Mammary epithelial cell (primary cell): ENCODE measurements at regions of chr22 and their contacts with region 1.

Region 1: GRCh38 chr22:50691521-50691920 is 18.9 kb downstream of the SHANK3 start:
- DNase-seq: peak; percentile 28
- H3K4me3 ChIP-seq: no peak overlapping the region
- H3K27ac ChIP-seq: no peak overlapping the region
- H3K4me1 ChIP-seq: peaks cover 14% of the 10 kb centered on the region
- H3K27me3 ChIP-seq: no peaks in the 10 kb centered on the region
- CTCF ChIP-seq: peak; percentile 63 to 72

Region 2: GRCh38 chr22:50641696-50642607 is 49.6 kb before region 1 on chr22:
- CTCF ChIA-PET with region 1: no interaction called
- dilution Hi-C with region 1: no loop called
- in situ Hi-C with region 1: no loop called
- intact Hi-C with region 1: loop called (anchors 1 kb)
- DNase-seq: no peak
- H3K4me3 ChIP-seq: no peak overlapping the region
- H3K27ac ChIP-seq: no peak overlapping the region
- H3K4me1 ChIP-seq: no peaks in the 10 kb centered on the region
- H3K27me3 ChIP-seq: peaks cover 8% of the 10 kb centered on the region
- CTCF ChIP-seq: peak; percentile 18 to 56